Common myeloid progenitor, CD34-positive (primary cell): ENCODE measurements at regions of chr5 and their contacts with region 1.

Region 1: GRCh38 chr5:64229163-64229774 is 63.6 kb downstream of the RNF180 start:
- DNase-seq: peak; percentile 14 to 39 (median 26)
- H3K4me3 ChIP-seq: no peak overlapping the region
- H3K27ac ChIP-seq: no peak overlapping the region
- H3K4me1 ChIP-seq: no peaks in the 10 kb centered on the region
- H3K27me3 ChIP-seq: no peaks in the 10 kb centered on the region

Region 2: DNA sequence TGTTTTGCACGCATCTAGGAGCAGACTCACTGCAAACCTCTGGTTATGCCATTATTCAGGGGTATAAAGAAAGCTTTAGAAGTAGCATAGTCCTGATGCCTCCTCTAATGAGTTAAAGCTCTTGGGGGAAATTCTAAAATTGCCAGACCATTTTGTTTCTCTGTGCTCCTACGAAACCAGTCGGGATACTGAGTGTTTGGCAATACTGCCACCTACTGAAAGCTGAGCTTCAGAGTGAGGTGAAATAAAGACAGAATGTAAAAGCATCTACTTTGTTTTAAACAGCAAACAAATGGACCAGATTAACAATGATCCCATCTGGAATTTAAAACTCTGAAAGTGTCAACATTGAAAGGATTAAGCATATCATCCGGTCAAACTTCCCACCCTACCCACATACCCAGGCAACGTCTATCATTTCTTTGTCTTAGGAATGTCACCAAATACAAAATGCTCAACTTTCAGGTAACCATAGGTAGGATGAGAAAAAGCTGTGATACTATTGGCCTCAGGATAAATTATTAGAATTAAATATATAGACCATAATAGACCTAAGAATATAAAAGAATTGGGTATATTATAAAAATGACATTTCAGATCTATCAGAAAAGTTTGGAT is 383.2 kb after region 1 on chr5:
- CTCF ChIA-PET with region 1: interaction called, 29 read pairs
- POLR2A ChIA-PET with region 1: no interaction called
- DNase-seq: peak; percentile 22 to 62 (median 52)
- H3K4me3 ChIP-seq: no peak overlapping the region
- H3K27ac ChIP-seq: no peak overlapping the region
- H3K4me1 ChIP-seq: no peaks in the 10 kb centered on the region
- H3K27me3 ChIP-seq: peaks cover 0 to 17% (median 6%) of the 10 kb centered on the region in 5 experiments

Region 3: GRCh38 chr5:64939522-64940510 is 710.5 kb after region 1 on chr5:
- CTCF ChIA-PET with region 1: no interaction called
- POLR2A ChIA-PET with region 1: no interaction called
- DNase-seq: no peak
- H3K4me3 ChIP-seq: no peak overlapping the region
- H3K27ac ChIP-seq: no peak overlapping the region
- H3K4me1 ChIP-seq: no peaks in the 10 kb centered on the region
- H3K27me3 ChIP-seq: no peaks in the 10 kb centered on the region